ENCODE measurements at regions of chr7 and their contacts with region 1.

Region 1: GRCh38 chr7:26151953-26152781 is at the start of gene NFE2L3:
- DNase-seq: peak; percentile 71 to 90 (median 79)
- ATAC-seq: peak; percentile 90
- H3K4me3 ChIP-seq: peak within 1 kb of the TSS; percentile 77
- H3K4me3 Mint-ChIP-seq: peak within 1 kb of the TSS; percentile 85 to 100 (median 92)
- H3K27ac ChIP-seq: peak within 1 kb of the TSS; percentile 73
- H3K27ac Mint-ChIP-seq: peak within 1 kb of the TSS; percentile 74 to 97 (median 93)
- H3K4me1 ChIP-seq: peaks cover 26 to 33% of the 10 kb centered on the region in 2 donors
- H3K4me1 Mint-ChIP-seq: peaks cover 23 to 56% (median 51%) of the 10 kb centered on the region in 7 donors
- H3K27me3 ChIP-seq: no peaks in the 10 kb centered on the region
- H3K27me3 Mint-ChIP-seq: no peaks in the 10 kb centered on the region
- total RNA-seq, gene NFE2L3: 1.1 to 49.5 (median 4.5) TPM

Region 2: GRCh38 chr7:25951031-25951948 is 200.9 kb before region 1 on chr7:
- CTCF ChIA-PET with region 1: no interaction called
- POLR2A ChIA-PET with region 1: no interaction called
- intact Hi-C with region 1: loop called (anchors 1 to 2 kb)
- DNase-seq: peak; percentile 70 to 94 (median 87)
- ATAC-seq: peak; percentile 99
- H3K4me3 ChIP-seq: peak overlapping the region; percentile 61
- H3K4me3 Mint-ChIP-seq: peak overlapping the region; percentile 87 to 94 (median 92)
- H3K27ac ChIP-seq: peak overlapping the region; percentile 52
- H3K27ac Mint-ChIP-seq: peak overlapping the region in 7 of 9 donors; percentile 45 to 87 (median 81)
- H3K4me1 ChIP-seq: peaks cover 7 to 14% of the 10 kb centered on the region in 2 donors
- H3K4me1 Mint-ChIP-seq: peaks cover 16 to 31% (median 20%) of the 10 kb centered on the region in 7 donors
- H3K27me3 ChIP-seq: no peaks in the 10 kb centered on the region
- H3K27me3 Mint-ChIP-seq: peaks cover 0 to 22% (median 5%) of the 10 kb centered on the region in 5 donors

Region 3: DNA sequence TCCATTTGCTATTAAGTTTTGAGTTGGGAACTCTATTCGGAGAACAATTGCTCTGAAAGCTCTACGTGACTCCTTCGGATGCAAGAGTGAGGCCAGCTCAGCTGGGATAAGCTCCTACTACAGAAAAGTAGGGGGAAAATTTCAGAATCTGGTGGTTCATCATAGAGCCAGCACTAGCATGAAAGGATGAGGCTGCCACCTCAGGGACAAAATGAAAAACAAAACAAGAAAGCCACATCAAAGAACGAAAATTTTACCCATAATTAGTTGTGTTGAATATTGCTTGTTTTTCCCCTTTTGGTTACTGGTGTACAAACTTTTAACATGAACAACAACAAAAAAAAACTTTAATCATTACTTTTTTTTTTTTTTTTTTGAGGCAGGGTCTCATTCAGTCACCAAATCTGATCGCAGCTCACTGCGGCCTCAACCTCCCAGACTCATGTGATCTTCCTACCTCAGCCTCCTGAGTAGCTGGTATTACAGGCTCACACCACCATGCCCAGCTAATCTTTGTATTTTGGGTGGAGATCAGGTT is 39.9 kb before region 1 on chr7:
- CTCF ChIA-PET with region 1: no interaction called
- POLR2A ChIA-PET with region 1: interaction called, 3 read pairs
- intact Hi-C with region 1: loop called in 1 of 2 experiments (anchors 5 kb)
- DNase-seq: peak in 4 of 9 donors; percentile 19 to 39 (median 28)
- ATAC-seq: no peak
- H3K4me3 ChIP-seq: no peak overlapping the region
- H3K4me3 Mint-ChIP-seq: peak overlapping the region in 1 of 10 donors; percentile 14
- H3K27ac ChIP-seq: no peak overlapping the region
- H3K27ac Mint-ChIP-seq: no peak overlapping the region
- H3K4me1 ChIP-seq: no peaks in the 10 kb centered on the region
- H3K4me1 Mint-ChIP-seq: peaks cover 2 to 19% (median 13%) of the 10 kb centered on the region in 7 donors
- H3K27me3 ChIP-seq: no peaks in the 10 kb centered on the region
- H3K27me3 Mint-ChIP-seq: peaks cover 0 to 9% (median 4%) of the 10 kb centered on the region in 5 donors

Region 4: GRCh38 chr7:26180792-26181198 is 28.6 kb after region 1 on chr7:
- CTCF ChIA-PET with region 1: no interaction called
- POLR2A ChIA-PET with region 1: interaction called, 7 read pairs
- intact Hi-C with region 1: loop called in 1 of 2 experiments (anchors 1 kb)
- DNase-seq: no peak
- ATAC-seq: no peak
- H3K4me3 ChIP-seq: no peak overlapping the region
- H3K4me3 Mint-ChIP-seq: no peak overlapping the region
- H3K27ac ChIP-seq: peak overlapping the region; percentile 20
- H3K27ac Mint-ChIP-seq: peak overlapping the region in 6 of 9 donors; percentile 3 to 83 (median 77)
- H3K4me1 ChIP-seq: peaks cover 0 to 4% of the 10 kb centered on the region in 2 donors
- H3K4me1 Mint-ChIP-seq: peaks cover 22 to 69% (median 58%) of the 10 kb centered on the region in 7 donors
- H3K27me3 ChIP-seq: no peaks in the 10 kb centered on the region
- H3K27me3 Mint-ChIP-seq: no peaks in the 10 kb centered on the region

Region 5: GRCh38 chr7:26291699-26292538 is 139.8 kb after region 1 on chr7 and contains the start of gene SNX10:
- CTCF ChIA-PET with region 1: no interaction called
- POLR2A ChIA-PET with region 1: no interaction called
- intact Hi-C with region 1: loop called (anchors 1 to 2 kb)
- DNase-seq: peak; percentile 52 to 74 (median 72)
- ATAC-seq: peak; percentile 90
- H3K4me3 ChIP-seq: peak within 1 kb of the TSS; percentile 88
- H3K4me3 Mint-ChIP-seq: peak within 1 kb of the TSS; percentile 78 to 94 (median 91)
- H3K27ac ChIP-seq: peak within 1 kb of the TSS; percentile 58
- H3K27ac Mint-ChIP-seq: peak within 1 kb of the TSS; percentile 45 to 91 (median 82)
- H3K4me1 ChIP-seq: peaks cover 25 to 30% of the 10 kb centered on the region in 2 donors
- H3K4me1 Mint-ChIP-seq: peaks cover 22 to 41% (median 35%) of the 10 kb centered on the region in 7 donors
- H3K27me3 ChIP-seq: no peaks in the 10 kb centered on the region
- H3K27me3 Mint-ChIP-seq: peaks cover 0 to 13% (median 0%) of the 10 kb centered on the region in 5 donors
- total RNA-seq, gene SNX10: 5.0 to 37.0 (median 6.3) TPM

Measured in naive thymus-derived CD4-positive, alpha-beta T cell (primary cell).